Endothelial cell of umbilical vein (primary cell): ENCODE measurements at regions of chr11 and their contacts with region 1.

Region 1: GRCh38 chr11:12043959-12044819 is 35.8 kb upstream of the DKK3 start:
- DNase-seq: peak; percentile 95
- H3K4me3 ChIP-seq: no peak overlapping the region
- H3K27ac ChIP-seq: peak overlapping the region; percentile 84
- H3K4me1 ChIP-seq: peaks cover 41% of the 10 kb centered on the region
- H3K27me3 ChIP-seq: no peaks in the 10 kb centered on the region
- CTCF ChIP-seq: peak; percentile 79 to 92
- POLR2A ChIP-seq: no peak

Region 2: GRCh38 chr11:11798586-11799438 is 245.4 kb before region 1 on chr11:
- CTCF ChIA-PET with region 1: interaction called, 84 read pairs
- POLR2A ChIA-PET with region 1: no interaction called
- dilution Hi-C with region 1: no loop called
- intact Hi-C with region 1: loop called (anchors 1 kb)
- DNase-seq: peak; percentile 76
- H3K4me3 ChIP-seq: no peak overlapping the region
- H3K27ac ChIP-seq: no peak overlapping the region
- H3K4me1 ChIP-seq: no peaks in the 10 kb centered on the region
- H3K27me3 ChIP-seq: peaks cover 24 to 28% of the 10 kb centered on the region in 2 experiments
- CTCF ChIP-seq: peak; percentile 86 to 87
- POLR2A ChIP-seq: no peak

Region 3: DNA sequence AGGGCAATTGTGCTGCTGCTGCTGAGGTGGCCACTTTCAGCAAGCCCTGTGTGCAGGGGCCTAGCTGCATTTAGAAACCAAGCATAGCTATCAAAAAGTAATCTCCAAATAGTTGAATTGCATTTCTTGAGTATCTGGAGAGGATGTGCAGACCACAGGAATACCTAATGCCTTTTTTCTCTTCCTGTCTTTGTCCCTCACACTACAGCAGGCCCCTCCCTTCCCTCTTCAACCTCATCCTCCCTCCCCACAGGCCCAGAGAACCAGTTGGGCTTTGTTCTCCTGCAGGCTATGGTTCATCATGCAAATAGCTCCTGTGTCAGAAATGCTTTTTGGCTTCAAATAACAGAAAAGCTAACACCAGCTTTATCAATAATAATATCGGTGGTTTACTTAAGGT is 83.5 kb before region 1 on chr11:
- CTCF ChIA-PET with region 1: interaction called, 12 read pairs
- POLR2A ChIA-PET with region 1: no interaction called
- dilution Hi-C with region 1: no loop called
- intact Hi-C with region 1: no loop called
- DNase-seq: no peak
- H3K4me3 ChIP-seq: no peak overlapping the region
- H3K27ac ChIP-seq: no peak overlapping the region
- H3K4me1 ChIP-seq: peaks cover 11% of the 10 kb centered on the region
- H3K27me3 ChIP-seq: no peaks in the 10 kb centered on the region
- CTCF ChIP-seq: no peak
- POLR2A ChIP-seq: no peak

Region 4: DNA sequence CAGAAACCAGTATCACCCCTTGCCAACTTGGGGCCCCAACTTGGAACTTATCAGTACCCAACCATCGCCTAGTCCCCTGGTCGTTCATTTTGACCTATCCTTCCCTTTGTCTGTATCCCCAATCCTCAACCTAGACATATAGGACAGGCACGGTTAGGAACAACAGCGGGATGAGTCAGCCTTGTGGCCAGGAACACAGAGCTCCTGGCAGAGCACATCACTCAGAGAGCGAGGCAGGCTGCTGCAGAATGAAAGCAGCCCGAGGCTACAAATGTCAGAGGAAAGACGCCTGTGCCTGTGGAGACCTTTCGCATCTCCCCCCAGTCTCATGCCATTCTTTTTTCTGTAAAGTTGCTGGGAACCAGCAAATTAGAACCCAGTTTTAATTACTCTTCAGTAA is 50.4 kb before region 1 on chr11:
- CTCF ChIA-PET with region 1: interaction called, 11 read pairs
- POLR2A ChIA-PET with region 1: no interaction called
- dilution Hi-C with region 1: no loop called
- intact Hi-C with region 1: no loop called
- DNase-seq: peak; percentile 41
- H3K4me3 ChIP-seq: no peak overlapping the region
- H3K27ac ChIP-seq: peak overlapping the region; percentile 48
- H3K4me1 ChIP-seq: peaks cover 29% of the 10 kb centered on the region
- H3K27me3 ChIP-seq: no peaks in the 10 kb centered on the region
- CTCF ChIP-seq: no peak
- POLR2A ChIP-seq: no peak

Region 5: GRCh38 chr11:12122083-12122482 is 77.9 kb after region 1 on chr11:
- CTCF ChIA-PET with region 1: interaction called, 5 read pairs
- POLR2A ChIA-PET with region 1: no interaction called
- dilution Hi-C with region 1: no loop called
- intact Hi-C with region 1: loop called (anchors 1 kb)
- DNase-seq: no peak
- H3K4me3 ChIP-seq: no peak overlapping the region
- H3K27ac ChIP-seq: no peak overlapping the region
- H3K4me1 ChIP-seq: peaks cover 38% of the 10 kb centered on the region
- H3K27me3 ChIP-seq: no peaks in the 10 kb centered on the region
- CTCF ChIP-seq: peak; percentile 43 to 56
- POLR2A ChIP-seq: no peak

Region 6: DNA sequence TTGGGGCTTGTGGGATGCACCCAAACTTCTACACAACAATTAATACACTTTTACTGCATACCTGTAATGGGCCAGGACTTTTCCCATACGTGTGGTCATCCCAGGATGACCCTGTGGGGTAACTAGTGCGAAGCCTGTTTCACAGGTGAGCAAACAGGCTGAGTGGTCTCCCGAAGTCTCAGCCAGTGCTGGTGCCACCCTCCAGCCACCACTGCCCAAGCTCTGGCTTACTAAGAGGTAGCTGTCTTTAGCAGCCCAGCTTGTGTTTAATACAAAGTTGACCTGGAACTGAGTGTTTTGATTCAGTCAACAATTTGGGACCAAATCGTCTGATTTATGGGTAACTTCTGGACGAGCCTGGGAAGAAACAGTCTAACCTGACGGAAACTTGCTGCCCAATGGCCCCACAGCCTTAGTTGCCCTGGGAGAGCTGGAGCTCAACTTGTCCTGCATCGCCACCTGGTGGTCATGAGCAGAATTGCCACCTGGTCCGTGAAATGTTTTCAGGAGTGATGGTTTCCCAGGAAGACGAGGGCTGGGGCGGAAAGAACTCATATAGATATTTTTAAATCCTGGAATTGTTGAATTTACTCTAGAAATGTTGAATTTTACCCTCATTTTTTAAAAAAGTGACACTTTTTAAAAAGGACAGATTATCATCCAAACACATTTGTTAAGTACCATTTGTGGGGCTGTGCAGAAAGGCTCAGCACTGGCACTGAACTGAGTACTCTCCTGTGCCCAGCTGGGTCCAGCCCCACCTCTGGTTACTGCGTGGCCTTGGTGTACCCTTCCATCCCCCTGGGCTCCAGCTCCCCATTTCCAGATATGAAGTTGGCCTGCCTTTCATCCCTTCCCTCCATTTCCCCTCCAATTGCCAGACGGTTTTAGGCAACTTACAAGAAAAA is 237.6 kb after region 1 on chr11:
- CTCF ChIA-PET with region 1: interaction called, 219 read pairs
- POLR2A ChIA-PET with region 1: interaction called, 3 read pairs
- dilution Hi-C with region 1: no loop called
- intact Hi-C with region 1: loop called (anchors 1 kb)
- DNase-seq: peak; percentile 81
- H3K4me3 ChIP-seq: no peak overlapping the region
- H3K27ac ChIP-seq: no peak overlapping the region
- H3K4me1 ChIP-seq: peaks cover 27% of the 10 kb centered on the region
- H3K27me3 ChIP-seq: no peaks in the 10 kb centered on the region
- CTCF ChIP-seq: peak; percentile 82 to 91
- POLR2A ChIP-seq: no peak

Region 7: DNA sequence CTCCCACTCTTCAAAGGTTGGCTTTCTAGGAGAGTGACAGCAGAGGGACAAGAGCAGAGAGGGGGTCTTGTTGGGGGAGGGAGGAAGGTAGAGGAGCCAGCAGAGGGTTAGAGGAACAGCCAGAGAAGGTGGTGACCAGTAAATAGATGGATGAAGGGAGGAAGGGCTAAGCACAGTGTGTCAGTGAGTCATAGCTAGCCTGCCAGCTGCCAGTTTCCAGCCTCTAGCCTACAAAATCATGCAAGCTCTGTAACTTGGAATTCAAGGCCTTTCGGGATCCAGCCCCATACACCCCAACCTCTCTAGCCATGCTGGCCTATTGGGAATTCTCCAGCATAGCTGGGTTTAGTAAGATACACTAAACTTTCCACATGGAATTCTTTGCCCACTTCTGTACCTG is 482.6 kb after region 1 on chr11:
- CTCF ChIA-PET with region 1: no interaction called
- POLR2A ChIA-PET with region 1: no interaction called
- dilution Hi-C with region 1: no loop called
- intact Hi-C with region 1: no loop called
- DNase-seq: peak; percentile 24
- H3K4me3 ChIP-seq: no peak overlapping the region
- H3K27ac ChIP-seq: no peak overlapping the region
- H3K4me1 ChIP-seq: no peaks in the 10 kb centered on the region
- H3K27me3 ChIP-seq: no peaks in the 10 kb centered on the region
- CTCF ChIP-seq: no peak
- POLR2A ChIP-seq: no peak